Colonic mucosa (tissue), 4 donors: ENCODE measurements at regions of chr20 and their contacts with region 1.

Region 1: GRCh38 chr20:9439806-9440205 is 74.6 kb upstream of the LAMP5 start:
- DNase-seq: no peak
- H3K4me3 ChIP-seq: no peak overlapping the region
- H3K27ac ChIP-seq: no peak overlapping the region
- H3K4me1 ChIP-seq: no peaks in the 10 kb centered on the region
- H3K27me3 ChIP-seq: no peaks in the 10 kb centered on the region
- CTCF ChIP-seq: no peak

Region 2: GRCh38 chr20:9375221-9375681 is 64.6 kb before region 1 on chr20:
- intact Hi-C with region 1: loop called (anchors 10 kb)
- DNase-seq: no peak
- H3K4me3 ChIP-seq: no peak overlapping the region
- H3K27ac ChIP-seq: no peak overlapping the region
- H3K4me1 ChIP-seq: no peaks in the 10 kb centered on the region
- H3K27me3 ChIP-seq: no peaks in the 10 kb centered on the region
- CTCF ChIP-seq: no peak

Region 3: GRCh38 chr20:9467995-9468394 is 28.2 kb after region 1 on chr20:
- intact Hi-C with region 1: no loop called
- DNase-seq: no peak
- H3K4me3 ChIP-seq: no peak overlapping the region
- H3K27ac ChIP-seq: no peak overlapping the region
- H3K4me1 ChIP-seq: no peaks in the 10 kb centered on the region
- H3K27me3 ChIP-seq: no peaks in the 10 kb centered on the region
- CTCF ChIP-seq: peak; percentile 25